Dendritic cell treated with granulocyte-macrophage colony-stimulating factor and Interleukin-4, amounts not matched to agents 40 ng/mL and 50 ng/mL, for 4 days (primary cell): ENCODE measurements at regions of chr3 and their contacts with region 1.

Region 1: GRCh38 chr3:46935168-46935858 is 41.2 kb downstream of the CCDC12 start:
- H3K4me3 Mint-ChIP-seq: peak overlapping the region; percentile 6
- H3K27ac Mint-ChIP-seq: peak overlapping the region; percentile 39
- H3K4me1 Mint-ChIP-seq: peaks cover 96% of the 10 kb centered on the region
- H3K27me3 Mint-ChIP-seq: no peaks in the 10 kb centered on the region

Region 2: GRCh38 chr3:46953234-46954010 is 18.1 kb after region 1 on chr3:
- intact Hi-C with region 1: loop called (anchors 2 kb)
- H3K4me3 Mint-ChIP-seq: peak overlapping the region; percentile 26
- H3K27ac Mint-ChIP-seq: peak overlapping the region; percentile 20
- H3K4me1 Mint-ChIP-seq: peaks cover 94% of the 10 kb centered on the region
- H3K27me3 Mint-ChIP-seq: no peaks in the 10 kb centered on the region

Region 3: GRCh38 chr3:46970391-46971091 is 35.2 kb after region 1 on chr3:
- intact Hi-C with region 1: loop called (anchors 5 kb)
- H3K4me3 Mint-ChIP-seq: no peak overlapping the region
- H3K27ac Mint-ChIP-seq: no peak overlapping the region
- H3K4me1 Mint-ChIP-seq: peaks cover 90% of the 10 kb centered on the region
- H3K27me3 Mint-ChIP-seq: no peaks in the 10 kb centered on the region